ENCODE measurements at regions of chr20 and their contacts with region 1.

Region 1: GRCh38 chr20:53578492-53579222 is 15.0 kb downstream of the ZNF217 start:
- DNase-seq: peak; percentile 47
- H3K4me3 Mint-ChIP-seq: peak overlapping the region; percentile 75
- H3K27ac Mint-ChIP-seq: peak overlapping the region; percentile 86
- H3K4me1 Mint-ChIP-seq: peaks cover 78% of the 10 kb centered on the region
- H3K27me3 Mint-ChIP-seq: no peaks in the 10 kb centered on the region

Region 2: DNA sequence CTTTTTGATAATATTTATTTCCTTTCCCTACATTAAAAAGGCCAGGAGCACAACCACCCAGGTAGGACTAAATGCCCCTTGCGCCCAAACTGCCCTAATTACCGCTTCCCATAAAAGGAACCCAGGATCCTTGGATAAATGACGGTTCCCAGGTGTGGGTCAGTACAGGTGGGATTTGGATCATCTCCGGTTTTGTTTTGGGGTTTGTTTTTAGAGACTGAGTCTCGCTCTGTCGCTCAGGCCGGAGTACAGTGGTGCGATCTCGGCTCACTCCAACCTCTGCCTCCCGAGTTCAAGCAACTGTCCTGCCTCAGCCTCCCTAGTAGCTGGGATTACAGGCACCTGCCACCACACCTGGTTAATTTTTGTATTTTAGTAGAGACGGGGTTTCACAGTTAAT is 13.4 kb before region 1 on chr20:
- intact Hi-C with region 1: no loop called
- DNase-seq: no peak
- H3K4me3 Mint-ChIP-seq: no peak overlapping the region
- H3K27ac Mint-ChIP-seq: no peak overlapping the region
- H3K4me1 Mint-ChIP-seq: peaks cover 3% of the 10 kb centered on the region
- H3K27me3 Mint-ChIP-seq: no peaks in the 10 kb centered on the region

Region 3: GRCh38 chr20:53594068-53595017 is 15.7 kb after region 1 on chr20:
- intact Hi-C with region 1: loop called (anchors 2 kb)
- DNase-seq: peak; percentile 92
- H3K4me3 Mint-ChIP-seq: peak overlapping the region; percentile 85
- H3K27ac Mint-ChIP-seq: peak overlapping the region; percentile 92
- H3K4me1 Mint-ChIP-seq: peaks cover 49% of the 10 kb centered on the region
- H3K27me3 Mint-ChIP-seq: no peaks in the 10 kb centered on the region

Region 4: DNA sequence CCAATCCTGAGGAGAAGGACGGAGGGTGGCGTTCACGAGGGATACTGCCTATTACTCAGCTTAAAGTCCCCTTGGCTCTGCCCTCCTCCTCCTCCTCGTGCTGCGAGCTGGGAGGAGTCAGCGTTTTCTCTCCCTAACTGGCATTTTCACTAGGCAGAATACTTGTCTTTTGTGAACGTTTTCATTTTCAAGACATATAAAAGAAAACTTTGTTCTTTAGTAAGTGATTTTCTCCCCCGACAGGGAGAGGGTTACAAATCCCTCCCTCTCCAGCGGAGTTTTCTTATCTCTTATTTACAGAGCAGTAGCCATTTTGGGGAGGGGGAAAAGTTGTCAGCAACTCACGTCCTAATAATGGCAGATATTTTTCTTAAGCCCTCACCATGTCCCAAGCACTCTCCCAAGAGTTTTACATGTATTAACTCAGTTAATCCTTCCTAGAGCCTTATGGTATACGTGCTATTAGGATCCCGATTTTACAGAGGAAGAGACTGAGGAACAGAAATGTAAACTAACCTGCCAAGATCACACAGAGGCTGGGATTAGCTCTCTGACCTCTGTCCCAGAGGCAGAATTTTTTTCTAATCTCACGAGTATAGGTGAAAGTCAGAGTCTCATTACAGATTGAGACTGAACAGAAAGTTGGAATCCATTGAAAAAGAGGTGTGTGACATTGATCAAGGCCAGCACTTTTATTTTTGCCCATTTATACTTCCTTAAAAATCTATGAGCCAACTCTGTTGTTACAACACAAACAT is 45.0 kb after region 1 on chr20:
- intact Hi-C with region 1: no loop called
- DNase-seq: peak; percentile 32
- H3K4me3 Mint-ChIP-seq: peak overlapping the region; percentile 73
- H3K27ac Mint-ChIP-seq: peak overlapping the region; percentile 95
- H3K4me1 Mint-ChIP-seq: peaks cover 37% of the 10 kb centered on the region
- H3K27me3 Mint-ChIP-seq: no peaks in the 10 kb centered on the region

Region 5: DNA sequence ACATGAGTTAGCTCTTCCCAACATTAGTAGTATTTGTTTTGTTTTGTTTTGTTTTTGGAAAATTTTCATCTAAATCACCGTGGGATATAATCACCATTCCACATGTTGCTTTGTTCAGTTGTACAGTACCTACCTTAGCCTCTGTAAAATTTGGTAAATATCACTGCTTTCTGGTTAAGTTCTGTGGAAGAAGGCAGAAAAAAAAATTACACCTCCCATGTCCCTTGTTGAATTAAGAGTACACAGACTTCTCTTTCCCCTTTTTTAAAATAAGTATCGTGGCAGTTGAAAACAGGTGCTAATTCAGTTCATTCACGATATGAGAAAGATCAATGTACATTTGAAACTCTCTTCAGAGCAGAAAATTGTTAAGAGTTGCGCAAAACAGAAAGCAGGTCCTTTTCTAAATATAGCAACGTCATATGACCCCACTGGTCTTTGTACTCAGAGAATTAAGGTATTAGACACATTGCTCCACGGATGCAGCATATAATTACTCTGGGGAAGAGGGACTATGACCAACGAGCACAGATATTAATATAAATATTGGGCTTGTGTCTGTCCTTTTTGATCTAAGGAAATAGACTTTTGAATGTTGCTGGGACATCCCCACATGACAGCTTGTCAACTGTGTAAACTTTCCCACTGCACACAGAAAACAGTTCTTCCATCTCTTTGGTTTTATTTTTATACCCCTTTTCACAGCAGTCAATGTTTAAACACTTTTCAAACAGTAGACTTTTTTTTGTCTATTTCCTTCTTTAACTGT is 73.6 kb after region 1 on chr20:
- intact Hi-C with region 1: loop called (anchors 2 kb)
- DNase-seq: no peak
- H3K4me3 Mint-ChIP-seq: peak overlapping the region; percentile 75
- H3K27ac Mint-ChIP-seq: peak overlapping the region; percentile 99
- H3K4me1 Mint-ChIP-seq: peaks cover 39% of the 10 kb centered on the region
- H3K27me3 Mint-ChIP-seq: no peaks in the 10 kb centered on the region

Region 6: GRCh38 chr20:53750827-53751619 is 172.4 kb after region 1 on chr20:
- intact Hi-C with region 1: loop called (anchors 2 kb)
- DNase-seq: peak; percentile 59
- H3K4me3 Mint-ChIP-seq: peak overlapping the region; percentile 59
- H3K27ac Mint-ChIP-seq: peak overlapping the region; percentile 99
- H3K4me1 Mint-ChIP-seq: peaks cover 63% of the 10 kb centered on the region
- H3K27me3 Mint-ChIP-seq: no peaks in the 10 kb centered on the region

Region 7: DNA sequence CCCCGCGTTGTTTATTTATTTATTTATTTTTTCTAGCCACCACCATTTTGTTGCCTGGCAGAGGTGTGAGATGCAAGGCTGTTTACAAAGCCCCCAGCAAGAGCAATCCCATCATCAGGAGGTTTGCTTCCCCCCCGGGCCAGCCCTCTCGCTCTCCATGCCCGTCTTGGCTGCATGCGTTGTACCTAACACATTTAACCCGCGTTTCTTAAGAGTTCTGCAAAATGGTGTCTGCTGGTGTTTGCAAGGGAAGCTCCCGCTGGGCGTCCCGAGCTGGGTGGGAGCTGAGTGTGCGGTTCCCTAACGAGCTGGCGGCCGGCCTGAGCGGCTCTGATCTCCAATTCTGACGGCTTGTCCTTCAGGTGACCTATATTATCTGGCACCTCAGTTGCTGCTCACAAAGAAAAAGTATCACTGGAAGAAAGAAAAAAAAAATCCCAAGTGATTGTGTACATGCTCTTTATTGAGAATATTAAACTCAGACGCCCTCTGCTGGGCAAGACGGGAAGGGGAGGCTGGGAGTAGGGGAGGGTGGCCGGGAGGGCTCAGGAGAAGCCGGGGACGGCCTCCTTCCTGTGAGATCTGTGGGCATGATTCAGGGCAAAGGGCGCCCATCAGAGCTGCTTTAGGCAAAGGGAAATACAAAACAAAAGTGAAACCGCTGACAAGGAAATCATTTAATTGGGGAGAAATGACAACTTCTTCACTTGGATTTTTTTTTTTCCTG is 337.0 kb after region 1 on chr20:
- intact Hi-C with region 1: loop called (anchors 1 kb)
- DNase-seq: peak; percentile 89
- H3K4me3 Mint-ChIP-seq: peak overlapping the region; percentile 89
- H3K27ac Mint-ChIP-seq: peak overlapping the region; percentile 92
- H3K4me1 Mint-ChIP-seq: peaks cover 51% of the 10 kb centered on the region
- H3K27me3 Mint-ChIP-seq: no peaks in the 10 kb centered on the region

Region 8: GRCh38 chr20:53949319-53949889 is 370.7 kb after region 1 on chr20:
- intact Hi-C with region 1: loop called (anchors 2 kb)
- DNase-seq: peak; percentile 79
- H3K4me3 Mint-ChIP-seq: peak overlapping the region; percentile 49
- H3K27ac Mint-ChIP-seq: peak overlapping the region; percentile 90
- H3K4me1 Mint-ChIP-seq: peaks cover 31% of the 10 kb centered on the region
- H3K27me3 Mint-ChIP-seq: no peaks in the 10 kb centered on the region